Astrocyte of the cerebellum (primary cell): ENCODE measurements at regions of chr15 and their contacts with region 1.

Region 1: GRCh38 chr15:41039121-41039520 is 77.0 kb downstream of the INO80 start:
- DNase-seq: no peak
- H3K4me3 ChIP-seq: no peak overlapping the region
- CTCF ChIP-seq: no peak

Region 2: DNA sequence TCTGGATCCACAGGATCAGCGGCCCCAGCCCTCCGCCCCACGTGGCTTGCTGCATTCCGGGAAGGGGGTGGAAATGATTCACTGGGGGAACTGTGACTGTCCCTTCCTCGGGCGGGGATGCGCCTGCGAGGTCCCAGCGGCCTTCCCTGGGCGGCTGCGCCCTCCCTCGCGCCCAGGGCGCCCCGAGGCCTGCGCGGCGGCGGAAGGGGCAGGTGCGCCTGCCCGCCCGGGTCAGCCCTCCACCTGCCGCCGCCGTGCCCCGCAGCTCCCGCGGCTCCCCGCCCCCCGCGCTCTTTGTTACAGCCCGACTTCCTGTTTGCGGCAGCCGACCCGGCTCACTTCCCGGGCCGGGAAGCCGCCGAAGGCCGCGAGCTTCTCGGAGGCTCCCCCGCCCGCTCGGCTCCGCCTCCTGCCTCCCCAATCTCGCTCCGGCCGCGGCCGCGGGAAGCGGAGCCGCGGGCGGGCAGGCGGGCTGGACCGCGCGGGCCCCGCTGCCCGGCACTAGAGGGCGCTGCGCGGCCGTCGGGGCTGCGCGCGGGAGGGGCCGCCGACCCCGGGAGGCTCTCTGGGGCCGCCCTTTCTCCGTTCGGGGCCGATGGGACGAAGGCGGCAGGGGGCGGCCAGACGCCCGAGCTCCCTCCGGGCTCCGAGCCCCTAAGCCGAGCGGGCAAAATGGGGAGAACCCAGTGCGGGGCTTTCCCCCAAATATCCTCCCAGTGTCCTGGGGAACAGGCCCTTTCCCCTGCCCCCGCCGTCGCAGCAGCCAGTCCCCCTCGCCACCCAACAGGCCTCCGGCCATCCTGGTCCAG is 97.4 kb before region 1 on chr15:
- in situ Hi-C with region 1: no loop called
- DNase-seq: peak; percentile 13
- H3K4me3 ChIP-seq: peak overlapping the region; percentile 44
- CTCF ChIP-seq: peak; percentile 23

Region 3: GRCh38 chr15:40999190-40999589 is 39.9 kb before region 1 on chr15:
- in situ Hi-C with region 1: no loop called
- DNase-seq: no peak
- H3K4me3 ChIP-seq: no peak overlapping the region
- CTCF ChIP-seq: no peak

Region 4: GRCh38 chr15:41079717-41080116 is 40.6 kb after region 1 on chr15:
- in situ Hi-C with region 1: loop called (anchors 5 kb)
- DNase-seq: peak; percentile 32
- H3K4me3 ChIP-seq: no peak overlapping the region
- CTCF ChIP-seq: no peak